ENCODE measurements at regions of chr22 and their contacts with region 1.

Region 1: DNA sequence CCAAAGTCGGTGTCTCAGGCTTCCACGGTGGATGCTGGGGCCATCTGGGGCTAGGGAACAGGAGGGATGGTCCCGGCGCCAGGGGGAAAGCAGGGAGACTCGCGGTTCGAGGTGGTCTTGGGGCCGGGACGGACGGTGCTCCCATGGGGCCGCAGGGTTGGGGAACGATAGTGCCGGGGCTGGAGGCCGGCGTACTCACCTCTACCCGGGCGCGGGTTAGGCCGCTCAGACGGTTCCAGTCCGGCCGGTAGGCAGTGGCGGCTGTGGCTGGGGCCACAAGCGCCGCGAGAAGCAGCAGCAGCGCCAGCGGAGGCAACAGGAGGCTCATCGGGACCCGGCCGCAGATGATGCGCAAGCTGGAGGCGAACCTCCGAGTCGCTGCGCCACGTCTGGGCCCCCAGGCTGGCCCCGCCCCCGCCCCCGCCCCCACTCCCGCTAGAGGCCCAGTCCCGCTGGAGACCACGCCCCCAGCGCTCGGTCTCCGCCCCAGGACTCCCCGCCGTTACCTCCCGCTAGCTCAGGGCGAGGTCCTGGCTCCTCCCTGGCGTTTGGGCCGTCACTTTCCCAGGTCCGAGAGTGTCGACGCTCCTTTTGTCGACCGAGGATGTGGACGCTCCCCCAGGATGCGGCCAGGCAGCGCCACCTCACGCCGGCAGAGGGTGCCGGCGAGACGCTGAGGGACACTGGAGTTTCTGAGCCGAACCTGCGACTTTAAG is at the start of gene SELENOM:
- DNase-seq: peak; percentile 98
- total RNA-seq, gene SELENOM: 77.7 TPM

Region 2: DNA sequence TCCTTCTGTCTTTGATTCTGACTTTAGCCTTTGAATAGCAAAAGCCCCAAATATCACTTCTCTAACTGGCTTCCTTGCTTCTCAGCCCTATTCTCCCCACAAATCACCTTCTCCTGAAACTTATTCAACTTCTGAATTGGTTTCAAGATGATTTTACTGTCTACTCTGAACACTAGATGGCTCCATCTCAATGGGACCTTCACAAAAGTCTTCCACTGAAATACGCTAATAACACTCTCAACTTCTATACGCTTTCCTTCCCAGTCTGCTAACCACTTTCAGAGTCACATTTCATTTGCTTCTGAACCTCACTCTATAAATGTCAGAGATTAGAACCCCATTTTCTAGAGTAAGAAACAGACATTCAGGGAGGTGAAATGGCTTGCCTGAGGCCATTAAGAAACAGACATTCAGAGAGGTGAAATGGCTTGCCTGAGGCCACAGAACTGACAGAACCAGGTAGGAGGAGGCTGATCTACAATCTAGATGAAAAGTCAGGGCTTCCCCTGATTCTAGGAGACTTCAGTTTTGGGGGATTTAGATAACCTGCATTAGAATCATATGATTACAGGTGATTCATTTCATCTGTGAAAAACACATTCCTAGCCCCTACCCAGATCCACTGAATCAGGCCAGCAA is 159.4 kb before region 1 on chr22:
- intact Hi-C with region 1: loop called (anchors 5 kb)
- DNase-seq: no peak

Region 3: GRCh38 chr22:31230871-31231621 is 123.7 kb after region 1 on chr22:
- intact Hi-C with region 1: loop called (anchors 5 kb)
- DNase-seq: no peak

Region 4: DNA sequence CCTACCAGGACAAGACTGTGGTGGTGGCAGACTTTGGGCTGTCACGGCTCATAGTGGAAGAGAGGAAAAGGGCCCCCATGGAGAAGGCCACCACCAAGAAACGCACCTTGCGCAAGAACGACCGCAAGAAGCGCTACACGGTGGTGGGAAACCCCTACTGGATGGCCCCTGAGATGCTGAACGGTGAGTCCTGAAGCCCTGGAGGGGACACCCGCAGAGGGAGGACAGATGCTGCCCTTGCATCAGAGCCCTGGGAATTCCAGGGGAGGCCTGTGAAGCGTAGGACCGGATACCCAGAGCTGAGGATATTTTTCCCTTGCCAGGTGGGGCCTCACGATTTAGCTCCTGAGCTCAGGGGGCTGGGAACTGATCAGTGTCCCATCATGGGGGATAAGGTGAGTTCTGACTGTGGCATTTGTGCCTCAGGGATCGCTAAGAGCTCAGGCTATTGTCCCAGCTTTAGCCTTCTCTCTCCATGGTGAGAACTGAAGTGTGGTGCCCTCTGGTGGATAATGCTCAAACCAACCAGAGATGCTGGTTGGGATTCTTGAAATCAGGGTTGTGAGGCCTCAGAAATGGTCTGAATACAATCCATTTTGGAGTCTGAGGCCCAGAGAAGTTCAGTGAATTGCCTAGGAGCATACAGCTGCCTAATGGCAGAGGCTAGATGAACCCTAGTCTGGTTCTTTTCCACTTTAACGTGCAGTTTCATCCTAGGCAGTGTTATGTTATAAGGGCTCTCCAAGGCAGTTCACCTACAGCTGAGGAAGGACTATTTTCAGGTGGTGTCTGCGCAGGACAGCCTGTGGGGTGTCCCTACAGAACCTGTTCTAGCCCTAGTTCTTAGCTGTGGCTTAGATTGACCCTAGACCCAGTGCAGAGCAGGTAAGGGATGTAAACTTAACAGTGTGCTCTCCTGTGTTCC is 165.4 kb after region 1 on chr22:
- intact Hi-C with region 1: loop called (anchors 10 kb)
- DNase-seq: peak; percentile 74